GM10248 (cell line): ENCODE measurements at regions of chr5 and their contacts with region 1.

Region 1: DNA sequence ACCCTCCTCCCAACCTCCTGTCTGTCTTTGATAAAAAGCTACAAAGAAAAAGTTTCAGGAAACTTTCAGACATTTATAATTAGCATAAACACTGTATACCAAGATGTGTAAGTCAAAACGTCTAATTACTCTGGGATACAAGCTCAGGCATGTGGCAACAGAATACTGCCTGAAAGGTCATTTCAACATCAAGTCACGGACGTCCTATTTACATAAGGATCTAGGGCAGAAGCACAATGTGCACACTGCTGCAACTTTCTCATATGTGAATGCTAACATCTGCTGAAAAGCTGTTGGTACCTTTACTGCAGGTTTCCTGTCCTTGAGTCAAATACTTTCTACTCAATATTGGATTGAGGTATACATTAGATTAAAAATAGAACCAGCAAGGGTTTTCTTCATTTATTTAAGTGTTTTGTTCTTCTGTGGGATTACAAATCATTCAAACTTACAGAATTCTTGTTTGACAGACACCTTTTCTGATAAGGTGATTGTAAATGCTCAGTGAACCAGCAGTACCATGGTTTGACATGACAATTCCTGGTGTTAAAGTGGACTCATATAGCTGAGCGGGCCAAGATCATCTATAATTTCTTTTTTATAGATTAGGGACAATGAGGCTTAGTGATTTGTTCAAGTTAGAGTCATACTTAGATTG is 36.8 kb downstream of the ELL2 start:
- DNase-seq: no peak
- CTCF ChIP-seq: no peak

Region 2: DNA sequence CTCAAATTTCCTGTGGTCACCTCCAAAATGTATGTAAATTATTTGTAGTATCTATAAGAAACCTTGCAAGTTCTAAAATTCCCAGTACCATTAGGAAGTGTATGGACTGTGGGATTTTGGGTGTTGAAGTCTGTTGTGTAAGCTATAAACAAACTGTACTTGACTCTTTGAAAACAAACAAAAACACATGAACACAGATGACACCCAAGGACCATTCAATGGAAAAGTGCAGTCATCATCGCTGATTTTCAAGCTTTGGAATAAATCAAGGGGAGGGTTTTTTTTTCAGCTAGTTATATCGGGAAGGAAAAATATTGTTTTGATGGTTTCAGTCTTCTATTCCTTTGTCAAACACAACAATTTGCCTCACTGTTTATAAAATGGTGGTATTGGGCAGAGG is 12.8 kb before region 1 on chr5:
- CTCF ChIA-PET with region 1: interaction called, 10 read pairs
- POLR2A ChIA-PET with region 1: no interaction called
- DNase-seq: no peak
- CTCF ChIP-seq: no peak